ENCODE measurements at regions of chr6 and their contacts with region 1.

Region 1: DNA sequence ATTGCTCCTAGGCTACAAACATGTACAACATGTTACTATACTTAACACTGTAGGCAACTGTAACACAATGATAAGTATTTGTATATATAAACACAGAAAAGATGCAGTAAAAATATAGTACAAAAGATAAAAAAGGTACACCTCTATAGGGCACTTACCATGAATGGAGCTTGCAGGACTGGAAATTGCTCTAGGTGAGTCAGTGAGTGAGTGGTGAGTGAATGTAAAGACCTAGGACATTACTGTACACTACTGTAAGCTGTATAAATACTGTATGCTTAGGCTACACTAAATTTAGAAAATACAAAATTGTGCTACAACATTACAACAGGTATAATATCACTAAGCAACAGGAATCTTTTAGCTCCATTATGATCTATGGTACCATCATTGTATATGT is 312.0 kb upstream of the PREP start:
- DNase-seq: no peak
- H3K4me3 ChIP-seq: no peak overlapping the region
- H3K27ac ChIP-seq: no peak overlapping the region
- H3K4me1 ChIP-seq: no peaks in the 10 kb centered on the region
- H3K27me3 ChIP-seq: no peaks in the 10 kb centered on the region
- CTCF ChIP-seq: no peak
- POLR2A ChIP-seq: no peak

Region 2: GRCh38 chr6:105851113-105851580 is 136.3 kb after region 1 on chr6:
- intact Hi-C with region 1: no loop called
- DNase-seq: no peak
- H3K4me3 ChIP-seq: no peak overlapping the region
- H3K27ac ChIP-seq: peak overlapping the region in 1 of 2 donors; percentile 43
- H3K4me1 ChIP-seq: no peaks in the 10 kb centered on the region
- H3K27me3 ChIP-seq: no peaks in the 10 kb centered on the region
- CTCF ChIP-seq: no peak
- POLR2A ChIP-seq: no peak

Region 3: GRCh38 chr6:106072501-106073090 is 357.8 kb after region 1 on chr6:
- intact Hi-C with region 1: loop called (anchors 5 kb)
- DNase-seq: no peak
- H3K4me3 ChIP-seq: no peak overlapping the region
- H3K27ac ChIP-seq: no peak overlapping the region
- H3K4me1 ChIP-seq: peaks cover 0 to 4% of the 10 kb centered on the region in 2 donors
- H3K27me3 ChIP-seq: no peaks in the 10 kb centered on the region
- CTCF ChIP-seq: no peak
- POLR2A ChIP-seq: no peak